HepG2 (cell line): ENCODE measurements at regions of chr10 and their contacts with region 1.

Region 1: DNA sequence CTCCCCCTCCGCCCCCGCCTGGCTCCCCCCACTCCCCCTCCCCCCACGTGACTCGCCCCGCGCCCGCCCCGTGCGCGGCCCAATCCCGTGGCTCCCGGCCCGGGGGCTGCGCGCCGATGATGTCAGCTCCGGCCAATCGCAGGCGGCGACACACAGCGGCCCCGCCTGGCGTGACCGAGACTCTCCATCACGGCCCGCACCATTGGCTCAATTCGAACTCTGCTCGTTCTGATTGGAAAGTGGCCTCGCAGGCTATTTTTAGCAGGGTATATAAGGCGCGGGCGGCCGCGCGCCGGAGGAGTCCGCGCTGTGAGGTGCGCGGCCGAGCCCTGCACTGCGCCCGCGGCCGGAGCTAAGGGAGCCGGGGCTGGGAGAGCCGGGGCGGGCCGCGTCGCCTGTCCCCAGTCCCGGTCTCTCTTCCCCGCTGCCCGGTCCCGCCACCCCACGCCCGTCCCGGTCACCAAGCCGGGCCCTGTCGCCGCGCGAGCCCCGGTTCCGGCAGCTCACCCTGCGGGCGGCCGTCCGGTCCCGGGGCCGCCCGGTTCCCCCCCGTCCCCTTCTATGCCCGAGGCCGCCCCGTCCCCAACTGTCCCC is 345 bp upstream of the KLF6 start:
- DNase-seq: peak; percentile 95
- ATAC-seq: peak; percentile 75
- H3K4me3 ChIP-seq: peak overlapping the region; percentile 69 to 98 (median 96)
- H3K27ac ChIP-seq: peak overlapping the region; percentile 99
- H3K4me1 ChIP-seq: peaks cover 51% of the 10 kb centered on the region
- H3K27me3 ChIP-seq: no peaks in the 10 kb centered on the region; a peak in 1 of 5 replicates
- CTCF ChIP-seq: no peak
- EP300 ChIP-seq: 0 out of 4 replicates have a peak, but pooled peaks of 1 of the 2 experiments have one; percentile 5
- POLR2A ChIP-seq: peak; percentile 88 to 94
- RAD21 ChIP-seq: peak; percentile 84

Region 2: DNA sequence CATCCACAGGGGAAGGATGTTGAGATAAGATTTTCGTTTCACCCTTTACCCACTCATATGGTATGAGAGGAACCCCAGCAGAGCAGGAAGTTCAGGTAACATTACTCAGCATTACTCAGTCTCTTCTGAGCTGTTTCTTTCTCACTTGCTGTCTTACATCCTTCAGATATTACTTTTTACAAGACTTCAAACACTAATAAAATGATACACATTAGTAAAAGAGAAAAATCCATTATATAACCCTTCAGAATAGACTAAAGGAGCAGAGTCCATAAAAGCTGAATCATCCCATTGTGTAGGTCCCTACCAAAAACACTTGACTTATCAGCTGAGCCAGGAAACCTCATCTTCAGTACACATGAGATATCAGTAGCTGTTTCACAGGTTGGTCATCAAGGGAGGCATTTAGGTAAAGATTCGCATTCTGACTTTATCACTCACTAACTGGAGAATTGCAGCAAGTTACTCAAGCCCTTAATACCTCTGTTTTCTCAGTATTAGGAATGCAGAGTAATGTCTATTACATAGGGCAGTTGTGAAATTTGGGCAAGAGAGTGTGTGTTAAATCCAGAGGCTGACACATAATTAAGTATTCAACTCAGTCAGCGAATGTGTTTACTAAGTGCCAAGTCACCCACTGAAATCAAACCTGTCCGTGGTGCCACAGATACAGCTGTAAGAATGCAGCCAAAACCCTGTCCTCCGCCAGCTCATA is 45.0 kb before region 1 on chr10:
- CTCF ChIA-PET with region 1: no interaction called
- POLR2A ChIA-PET with region 1: interaction called, 30 read pairs
- in situ Hi-C with region 1: no loop called
- intact Hi-C with region 1: no loop called
- DNase-seq: peak; percentile 98
- ATAC-seq: peak; percentile 97
- H3K4me3 ChIP-seq: no peak overlapping the region
- H3K27ac ChIP-seq: peak overlapping the region; percentile 67
- H3K4me1 ChIP-seq: peaks cover 65% of the 10 kb centered on the region
- H3K27me3 ChIP-seq: no peaks in the 10 kb centered on the region
- CTCF ChIP-seq: no peak
- EP300 ChIP-seq: peak; percentile 11 to 91; a peak in 2 of 4 replicates
- POLR2A ChIP-seq: no peak
- RAD21 ChIP-seq: no peak

Region 3: DNA sequence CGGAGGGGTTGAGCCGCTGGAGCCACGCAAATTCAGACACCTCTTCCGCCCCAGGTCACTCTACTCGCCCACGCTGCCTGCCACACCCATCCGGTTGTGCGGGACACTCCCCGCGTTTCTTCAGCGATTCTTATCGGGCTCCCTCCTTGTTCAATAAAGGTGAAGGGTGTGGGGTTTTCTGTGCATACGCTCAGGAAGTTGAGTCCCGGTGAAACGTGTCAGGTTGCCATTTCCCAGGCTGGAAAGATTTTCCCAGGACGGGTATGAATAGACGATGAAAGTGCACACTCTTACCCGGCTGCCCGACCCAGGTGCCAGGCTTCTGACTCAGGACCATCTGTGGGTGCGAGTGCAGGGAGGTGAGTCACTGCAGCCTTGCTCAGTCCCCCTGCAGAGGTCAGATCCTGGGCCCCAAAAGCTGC is 22.3 kb before region 1 on chr10:
- CTCF ChIA-PET with region 1: no interaction called
- POLR2A ChIA-PET with region 1: interaction called, 51 read pairs
- in situ Hi-C with region 1: no loop called
- intact Hi-C with region 1: no loop called
- DNase-seq: no peak
- ATAC-seq: no peak
- H3K4me3 ChIP-seq: no peak overlapping the region
- H3K27ac ChIP-seq: no peak overlapping the region
- H3K4me1 ChIP-seq: peaks cover 77% of the 10 kb centered on the region
- H3K27me3 ChIP-seq: peaks cover 0 to 6% of the 10 kb centered on the region in 2 experiments; a peak in 1 of 5 replicates
- CTCF ChIP-seq: no peak
- EP300 ChIP-seq: 0 out of 4 replicates have a peak, but pooled peaks of 1 of the 2 experiments have one; percentile 5
- POLR2A ChIP-seq: no peak
- RAD21 ChIP-seq: no peak

Region 4: DNA sequence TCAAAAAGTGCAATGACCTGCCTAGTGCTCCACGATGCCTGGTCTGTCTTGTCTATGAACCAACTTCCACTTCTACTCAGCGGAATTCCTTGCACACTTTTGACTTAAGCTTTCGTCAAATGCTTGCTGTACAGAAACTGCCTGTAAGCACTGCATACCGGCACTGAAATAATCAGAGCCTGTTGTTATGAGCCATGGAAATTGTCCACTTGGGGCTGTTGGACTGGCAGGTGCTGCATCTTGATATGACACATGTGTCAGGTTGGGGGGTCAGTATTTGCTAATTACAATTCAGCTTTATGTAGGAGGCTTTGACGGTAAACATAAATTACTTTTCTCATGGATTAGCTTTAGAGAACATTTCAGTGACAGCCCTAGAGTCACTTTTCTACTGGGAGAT is 31.6 kb after region 1 on chr10:
- CTCF ChIA-PET with region 1: no interaction called
- POLR2A ChIA-PET with region 1: interaction called, 217 read pairs
- in situ Hi-C with region 1: no loop called
- intact Hi-C with region 1: no loop called
- DNase-seq: no peak
- ATAC-seq: no peak
- H3K4me3 ChIP-seq: no peak overlapping the region
- H3K27ac ChIP-seq: no peak overlapping the region
- H3K4me1 ChIP-seq: peaks cover 32% of the 10 kb centered on the region
- H3K27me3 ChIP-seq: no peaks in the 10 kb centered on the region
- CTCF ChIP-seq: no peak
- EP300 ChIP-seq: no peak
- POLR2A ChIP-seq: no peak
- RAD21 ChIP-seq: no peak

Region 5: GRCh38 chr10:3887885-3888476 is 102.6 kb after region 1 on chr10:
- CTCF ChIA-PET with region 1: no interaction called
- POLR2A ChIA-PET with region 1: interaction called, 116 read pairs
- in situ Hi-C with region 1: loop called (anchors 5 kb)
- intact Hi-C with region 1: loop called (anchors 1 kb)
- DNase-seq: no peak
- ATAC-seq: no peak
- H3K4me3 ChIP-seq: no peak overlapping the region
- H3K27ac ChIP-seq: peak overlapping the region; percentile 78
- H3K4me1 ChIP-seq: peaks cover 68% of the 10 kb centered on the region
- H3K27me3 ChIP-seq: no peaks in the 10 kb centered on the region
- CTCF ChIP-seq: no peak
- EP300 ChIP-seq: no peak
- POLR2A ChIP-seq: no peak
- RAD21 ChIP-seq: no peak

Region 6: GRCh38 chr10:4127518-4128315 is 342.4 kb after region 1 on chr10:
- CTCF ChIA-PET with region 1: no interaction called
- POLR2A ChIA-PET with region 1: no interaction called
- in situ Hi-C with region 1: no loop called
- intact Hi-C with region 1: no loop called
- DNase-seq: peak; percentile 26
- ATAC-seq: peak; percentile 76
- H3K4me3 ChIP-seq: no peak overlapping the region
- H3K27ac ChIP-seq: no peak overlapping the region
- H3K4me1 ChIP-seq: peaks cover 26% of the 10 kb centered on the region
- H3K27me3 ChIP-seq: no peaks in the 10 kb centered on the region
- CTCF ChIP-seq: no peak
- EP300 ChIP-seq: no peak
- POLR2A ChIP-seq: no peak
- RAD21 ChIP-seq: no peak